ENCODE measurements at regions of chr12 and their contacts with region 1.

Region 1: DNA sequence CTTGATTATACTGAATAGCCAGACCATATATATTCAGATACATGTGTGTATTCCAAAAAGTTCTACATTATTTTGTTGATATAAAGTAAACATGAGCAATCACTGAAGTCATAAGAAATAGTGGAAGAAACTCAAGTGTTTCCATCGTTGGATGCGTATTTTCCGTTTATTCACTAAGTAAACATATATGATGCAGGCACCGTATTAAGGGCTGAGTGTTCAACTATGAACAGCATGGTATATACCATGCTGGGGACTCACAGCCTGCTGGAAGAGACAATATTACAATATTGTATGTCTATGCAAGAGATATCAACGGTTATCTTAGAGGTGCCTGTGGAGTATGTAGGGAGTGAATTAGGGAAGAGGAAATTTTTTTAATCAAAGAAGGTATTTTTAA is 1.2 kb downstream of the PYROXD1 start:
- DNase-seq: no peak
- H3K4me3 ChIP-seq: peak overlapping the region; percentile 99
- H3K27ac ChIP-seq: peak overlapping the region; percentile 97
- H3K4me1 ChIP-seq: peaks cover 23% of the 10 kb centered on the region
- H3K27me3 ChIP-seq: no peaks in the 10 kb centered on the region
- CTCF ChIP-seq: no peak

Region 2: GRCh38 chr12:21324551-21324950 is 114.1 kb before region 1 on chr12:
- CTCF ChIA-PET with region 1: no interaction called
- POLR2A ChIA-PET with region 1: no interaction called
- intact Hi-C with region 1: loop called (anchors 10 kb)
- DNase-seq: no peak
- H3K4me3 ChIP-seq: no peak overlapping the region
- H3K27ac ChIP-seq: no peak overlapping the region
- H3K4me1 ChIP-seq: no peaks in the 10 kb centered on the region
- H3K27me3 ChIP-seq: no peaks in the 10 kb centered on the region
- CTCF ChIP-seq: no peak

Region 3: GRCh38 chr12:21501379-21501956 is 62.8 kb after region 1 on chr12 and contains the starts of genes GOLT1B and RECQL:
- CTCF ChIA-PET with region 1: no interaction called
- POLR2A ChIA-PET with region 1: no interaction called
- intact Hi-C with region 1: loop called (anchors 2 kb)
- DNase-seq: peak; percentile 93 to 95
- H3K4me3 ChIP-seq: peak within 1 kb of the TSS; percentile 93
- H3K27ac ChIP-seq: peak within 1 kb of the TSS; percentile 62
- H3K4me1 ChIP-seq: peaks cover 28% of the 10 kb centered on the region
- H3K27me3 ChIP-seq: no peaks in the 10 kb centered on the region
- CTCF ChIP-seq: no peak
- total RNA-seq, gene GOLT1B: 38.0 and 39.0 TPM in 2 replicates
- total RNA-seq, gene RECQL: 33.1 and 34.5 TPM in 2 replicates

Region 4: GRCh38 chr12:21962236-21962635 is 523.6 kb after region 1 on chr12:
- CTCF ChIA-PET with region 1: no interaction called
- POLR2A ChIA-PET with region 1: no interaction called
- intact Hi-C with region 1: no loop called
- DNase-seq: no peak
- H3K4me3 ChIP-seq: no peak overlapping the region
- H3K27ac ChIP-seq: no peak overlapping the region
- H3K4me1 ChIP-seq: no peaks in the 10 kb centered on the region
- H3K27me3 ChIP-seq: no peaks in the 10 kb centered on the region
- CTCF ChIP-seq: no peak

Measured in PC-9 (cell line).